GM10248 (cell line): ENCODE measurements at regions of chr1 and their contacts with region 1.

Region 1: DNA sequence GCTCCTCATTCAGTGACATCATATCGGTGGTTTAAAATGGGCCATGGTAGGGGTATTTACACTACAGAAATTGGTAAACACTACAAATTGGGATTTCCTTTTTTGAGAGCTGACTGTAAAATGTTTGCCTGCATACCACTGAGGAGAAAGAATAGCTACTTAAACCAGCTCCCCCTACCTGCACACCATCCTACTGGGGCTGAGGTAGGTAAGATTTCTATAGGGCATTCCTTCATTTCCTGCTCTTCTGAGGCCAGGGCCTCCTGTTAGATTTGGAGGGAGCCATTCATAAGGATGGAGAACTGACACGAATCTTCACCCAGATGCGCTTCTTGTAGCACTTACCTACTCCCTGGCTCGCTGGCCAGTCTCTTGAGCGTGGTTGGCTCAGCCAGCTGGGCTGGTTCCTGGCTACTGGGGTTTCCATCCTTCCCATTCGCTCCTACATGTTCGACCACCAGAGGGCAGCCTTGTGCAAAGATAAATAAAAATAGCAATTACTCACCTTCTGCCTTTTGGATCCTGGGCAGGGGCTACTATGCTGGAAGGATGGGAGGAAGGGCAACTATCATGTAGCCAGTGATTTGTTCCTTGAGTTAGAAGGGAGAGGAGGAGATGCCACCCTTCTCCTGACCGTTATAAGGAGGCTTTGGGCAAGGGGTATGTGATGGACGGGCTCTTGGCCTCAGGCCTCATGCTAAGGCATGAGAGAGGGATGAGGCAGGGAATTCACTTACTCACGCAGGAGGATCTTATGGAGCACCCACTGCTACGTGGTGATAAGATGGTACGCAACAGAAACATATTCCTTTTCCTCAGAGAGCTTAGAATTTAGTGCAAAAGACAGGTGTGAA is 10.7 kb downstream of the OPTC start:
- DNase-seq: peak; percentile 82
- CTCF ChIP-seq: peak; percentile 84

Region 2: DNA sequence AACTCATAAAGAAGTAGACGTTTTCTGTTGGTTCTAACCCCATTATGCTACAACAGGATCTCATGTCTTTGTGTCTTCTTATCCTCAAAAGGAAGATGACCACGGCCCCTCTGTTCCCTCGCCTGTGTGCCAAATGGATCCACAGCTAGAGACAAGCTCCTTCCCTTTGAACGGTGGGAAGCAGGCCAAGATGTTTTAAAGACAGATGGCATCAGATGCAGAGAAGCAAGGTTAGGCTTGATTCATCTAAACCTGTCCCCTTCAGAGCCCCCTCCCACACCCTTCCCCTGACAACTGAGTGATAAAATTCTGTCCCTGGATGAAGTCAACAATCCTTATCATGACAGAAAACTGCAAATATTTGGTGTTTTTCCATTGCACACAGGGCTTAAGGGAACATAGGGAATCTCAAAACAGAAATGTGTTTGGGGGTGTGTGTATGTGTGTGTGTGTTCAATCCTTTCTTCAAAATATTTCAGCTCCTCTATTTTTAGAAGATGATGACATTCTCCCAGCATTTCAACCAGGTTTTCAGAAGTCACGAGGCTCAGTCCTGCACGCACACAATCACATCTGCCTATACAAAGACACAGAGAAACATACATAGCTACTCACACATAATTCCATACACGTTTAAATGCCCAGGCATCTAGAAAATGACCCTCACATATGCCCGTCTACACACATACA is 125.9 kb before region 1 on chr1:
- CTCF ChIA-PET with region 1: interaction called, 10 read pairs
- POLR2A ChIA-PET with region 1: no interaction called
- DNase-seq: no peak
- CTCF ChIP-seq: no peak

Region 3: GRCh38 chr1:203493901-203494300 is 10.7 kb before region 1 on chr1 and contains the start of gene OPTC:
- CTCF ChIA-PET with region 1: interaction called, 20 read pairs
- POLR2A ChIA-PET with region 1: no interaction called
- DNase-seq: no peak
- CTCF ChIP-seq: no peak

Region 4: GRCh38 chr1:203519078-203519770 is 14.6 kb after region 1 on chr1:
- CTCF ChIA-PET with region 1: interaction called, 10 read pairs
- POLR2A ChIA-PET with region 1: no interaction called
- DNase-seq: no peak
- CTCF ChIP-seq: no peak